ENCODE measurements at regions of chr6 and their contacts with region 1.

Region 1: DNA sequence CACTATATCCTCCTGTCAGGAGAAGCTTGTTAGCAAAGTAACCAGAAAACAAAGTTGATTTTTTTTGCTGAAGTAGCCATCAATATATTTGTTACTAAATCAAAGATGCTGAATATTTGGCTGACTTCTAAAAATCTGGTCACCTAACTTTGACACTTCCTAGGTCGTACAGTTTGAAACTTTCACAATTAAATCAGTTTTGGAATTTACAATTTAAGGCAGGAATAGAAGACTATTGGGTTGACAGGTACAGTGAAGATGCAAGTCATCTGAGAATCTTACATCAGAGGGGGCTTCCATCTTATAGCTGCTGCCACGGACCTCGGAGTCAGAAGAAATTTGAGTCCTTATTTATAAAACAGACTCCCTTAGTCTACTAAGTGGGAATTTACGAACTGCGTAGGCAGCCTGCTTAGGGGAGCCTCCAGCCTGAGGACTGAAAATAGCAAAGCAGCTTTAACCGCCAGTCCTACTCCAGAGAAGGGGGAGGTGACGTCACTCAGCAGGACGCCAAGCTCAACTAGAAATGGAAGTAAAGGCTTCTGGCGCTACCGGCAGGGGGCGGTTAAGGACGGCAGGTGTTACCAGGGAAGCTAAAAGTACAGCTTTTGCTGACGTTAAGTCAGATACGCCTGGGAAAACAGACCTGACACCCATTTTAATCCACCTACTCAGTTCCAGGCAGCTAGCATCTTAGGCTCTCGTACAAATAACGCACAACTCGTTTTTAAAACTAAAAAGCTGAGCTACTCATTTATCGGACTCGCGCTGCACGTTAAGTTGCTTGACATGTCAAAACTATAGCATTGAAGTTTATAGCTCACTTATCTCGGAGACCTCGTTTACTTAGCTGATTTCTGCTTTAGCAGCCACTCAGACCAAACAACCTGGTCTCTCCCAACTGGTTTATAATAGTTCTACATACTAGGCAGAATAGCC is 61.1 kb upstream of the HFE start:
- DNase-seq: peak; percentile 82 to 98 (median 95)
- ATAC-seq: peak; percentile 60
- H3K4me3 ChIP-seq: peak overlapping the region; percentile 75
- H3K4me3 Mint-ChIP-seq: peak overlapping the region; percentile 81 to 99 (median 94)
- H3K27ac ChIP-seq: peak overlapping the region; percentile 94
- H3K27ac Mint-ChIP-seq: peak overlapping the region; percentile 93 to 100 (median 98)
- H3K4me1 ChIP-seq: peaks cover 11 to 22% of the 10 kb centered on the region in 2 donors
- H3K4me1 Mint-ChIP-seq: peaks cover 12 to 81% (median 50%) of the 10 kb centered on the region in 7 donors
- H3K27me3 ChIP-seq: no peaks in the 10 kb centered on the region
- H3K27me3 Mint-ChIP-seq: peaks cover 0 to 9% (median 0%) of the 10 kb centered on the region in 5 donors

Region 2: GRCh38 chr6:25107218-25107617 is 918.9 kb before region 1 on chr6:
- CTCF ChIA-PET with region 1: no interaction called
- POLR2A ChIA-PET with region 1: no interaction called
- intact Hi-C with region 1: no loop called
- DNase-seq: no peak
- ATAC-seq: no peak
- H3K4me3 ChIP-seq: no peak overlapping the region
- H3K4me3 Mint-ChIP-seq: no peak overlapping the region
- H3K27ac ChIP-seq: no peak overlapping the region
- H3K27ac Mint-ChIP-seq: no peak overlapping the region
- H3K4me1 ChIP-seq: no peaks in the 10 kb centered on the region
- H3K4me1 Mint-ChIP-seq: peaks cover 0 to 34% (median 0%) of the 10 kb centered on the region in 7 donors
- H3K27me3 ChIP-seq: no peaks in the 10 kb centered on the region
- H3K27me3 Mint-ChIP-seq: no peaks in the 10 kb centered on the region

Region 3: DNA sequence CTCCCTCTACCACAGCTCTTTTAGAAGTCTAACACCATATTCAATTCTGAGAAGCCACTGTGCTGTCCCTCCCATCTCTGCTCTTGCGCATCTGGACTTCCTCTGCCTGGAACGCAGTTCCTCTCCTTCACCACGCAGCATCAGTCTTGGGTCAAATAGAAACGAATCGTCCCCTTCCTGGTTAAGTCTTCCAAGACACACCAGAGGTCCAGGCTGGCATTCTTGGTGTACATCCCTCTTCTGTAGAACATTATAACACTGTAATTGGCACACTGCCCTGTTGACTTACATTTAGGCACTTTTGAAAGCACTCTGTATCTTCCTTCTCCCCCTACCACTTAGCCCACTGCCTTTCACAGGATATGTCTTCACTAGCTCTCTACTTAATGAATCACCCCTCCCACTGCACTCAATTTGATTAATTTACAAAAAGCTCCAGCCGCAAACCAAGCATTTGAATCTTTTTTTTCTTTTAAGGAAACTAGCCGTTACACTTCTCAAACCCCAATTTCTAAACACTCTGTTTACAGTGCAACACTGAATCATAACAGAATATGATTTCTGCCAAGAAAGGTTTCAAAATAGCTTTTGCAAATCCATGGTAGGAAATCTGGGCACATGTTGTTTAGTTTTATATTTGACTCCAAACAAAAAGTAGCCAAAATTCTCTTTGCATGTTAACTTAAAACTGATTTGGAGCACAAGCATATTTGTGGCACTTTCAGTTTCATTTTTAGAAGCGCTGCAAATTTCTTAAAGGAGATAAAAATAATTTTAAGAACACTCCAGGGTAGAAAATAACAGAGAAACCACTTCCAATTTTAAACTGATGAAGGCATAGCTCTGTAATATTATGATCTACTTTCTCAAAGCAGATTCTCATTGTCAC is 887.7 kb before region 1 on chr6:
- CTCF ChIA-PET with region 1: no interaction called
- POLR2A ChIA-PET with region 1: interaction called, 3 read pairs
- intact Hi-C with region 1: loop called in 1 of 2 experiments (anchors 5 kb)
- DNase-seq: peak; percentile 14 to 67 (median 60)
- ATAC-seq: peak; percentile 94
- H3K4me3 ChIP-seq: peak overlapping the region; percentile 61
- H3K4me3 Mint-ChIP-seq: peak overlapping the region; percentile 84 to 98 (median 92)
- H3K27ac ChIP-seq: peak overlapping the region; percentile 76
- H3K27ac Mint-ChIP-seq: peak overlapping the region; percentile 87 to 97 (median 96)
- H3K4me1 ChIP-seq: peaks cover 12 to 16% of the 10 kb centered on the region in 2 donors
- H3K4me1 Mint-ChIP-seq: peaks cover 22 to 45% (median 27%) of the 10 kb centered on the region in 7 donors
- H3K27me3 ChIP-seq: no peaks in the 10 kb centered on the region
- H3K27me3 Mint-ChIP-seq: no peaks in the 10 kb centered on the region

Region 4: DNA sequence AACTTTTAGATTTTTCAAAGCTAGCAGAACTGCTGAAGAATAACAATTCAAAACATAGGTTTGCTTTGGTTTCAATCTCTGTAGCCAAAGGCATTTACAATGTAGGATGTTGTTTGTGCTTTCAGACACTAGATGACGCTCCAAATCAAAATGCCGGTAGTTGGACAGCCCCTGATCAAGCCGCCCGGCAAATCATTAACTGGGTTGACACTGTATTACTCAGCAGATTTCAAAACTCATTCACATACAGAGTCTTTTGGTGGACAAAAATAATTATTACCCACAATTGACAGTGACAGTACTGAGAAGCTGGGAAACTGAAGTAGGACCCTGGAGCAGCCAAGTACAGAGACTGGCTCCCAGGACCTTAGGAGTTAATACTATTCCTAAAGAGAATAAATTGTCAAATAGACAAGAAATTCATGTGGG is 39.8 kb after region 1 on chr6:
- CTCF ChIA-PET with region 1: interaction called, 21 read pairs
- POLR2A ChIA-PET with region 1: interaction called, 2,497 read pairs
- intact Hi-C with region 1: no loop called
- DNase-seq: peak in 7 of 9 donors; percentile 51 to 74 (median 61)
- ATAC-seq: peak; percentile 97
- H3K4me3 ChIP-seq: no peak overlapping the region
- H3K4me3 Mint-ChIP-seq: no peak overlapping the region
- H3K27ac ChIP-seq: no peak overlapping the region
- H3K27ac Mint-ChIP-seq: no peak overlapping the region
- H3K4me1 ChIP-seq: no peaks in the 10 kb centered on the region
- H3K4me1 Mint-ChIP-seq: peaks cover 1 to 22% (median 11%) of the 10 kb centered on the region in 7 donors
- H3K27me3 ChIP-seq: no peaks in the 10 kb centered on the region
- H3K27me3 Mint-ChIP-seq: peaks cover 0 to 39% (median 0%) of the 10 kb centered on the region in 5 donors

Region 5: GRCh38 chr6:26183581-26184366 is 157.6 kb after region 1 on chr6:
- CTCF ChIA-PET with region 1: no interaction called
- POLR2A ChIA-PET with region 1: interaction called, 292 read pairs
- intact Hi-C with region 1: no loop called
- DNase-seq: peak; percentile 43 to 83 (median 77)
- ATAC-seq: peak; percentile 91
- H3K4me3 ChIP-seq: peak overlapping the region; percentile 82
- H3K4me3 Mint-ChIP-seq: peak overlapping the region; percentile 84 to 99 (median 98)
- H3K27ac ChIP-seq: peak overlapping the region; percentile 76
- H3K27ac Mint-ChIP-seq: peak overlapping the region; percentile 83 to 99 (median 90)
- H3K4me1 ChIP-seq: peaks cover 13 to 30% of the 10 kb centered on the region in 2 donors
- H3K4me1 Mint-ChIP-seq: peaks cover 19 to 59% (median 49%) of the 10 kb centered on the region in 7 donors
- H3K27me3 ChIP-seq: no peaks in the 10 kb centered on the region
- H3K27me3 Mint-ChIP-seq: no peaks in the 10 kb centered on the region

Region 6: DNA sequence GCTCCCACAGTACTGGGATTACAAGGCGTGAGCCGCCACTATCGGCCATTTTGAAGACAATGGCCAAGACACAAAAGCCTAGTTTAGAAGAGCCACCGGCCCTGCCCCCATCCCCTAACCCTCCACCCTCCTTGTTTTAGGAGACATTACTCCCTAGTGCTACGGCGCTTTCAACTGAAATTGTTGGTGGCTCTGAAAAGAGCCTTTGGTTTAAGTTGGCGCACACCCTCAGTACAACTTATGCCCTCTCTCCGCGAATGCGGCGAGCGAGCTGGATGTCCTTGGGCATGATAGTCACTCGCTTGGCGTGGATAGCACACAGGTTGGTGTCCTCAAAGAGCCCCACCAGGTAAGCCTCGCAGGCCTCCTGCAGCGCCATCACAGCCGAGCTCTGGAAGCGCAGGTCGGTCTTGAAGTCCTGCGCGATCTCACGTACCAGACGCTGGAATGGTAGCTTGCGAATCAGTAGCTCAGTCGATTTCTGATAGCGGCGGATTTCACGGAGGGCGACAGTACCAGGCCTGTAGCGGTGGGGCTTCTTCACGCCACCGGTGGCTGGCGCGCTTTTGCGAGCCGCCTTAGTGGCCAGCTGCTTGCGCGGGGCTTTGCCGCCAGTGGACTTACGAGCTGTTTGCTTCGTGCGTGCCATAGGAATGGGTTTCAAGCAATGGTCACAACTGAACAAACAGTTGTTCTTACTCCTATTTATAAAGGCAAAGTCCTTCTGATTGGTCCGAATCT is 224.0 kb after region 1 on chr6:
- CTCF ChIA-PET with region 1: no interaction called
- POLR2A ChIA-PET with region 1: interaction called, 23 read pairs
- intact Hi-C with region 1: no loop called
- DNase-seq: peak; percentile 53 to 85 (median 80)
- ATAC-seq: peak; percentile 85
- H3K4me3 ChIP-seq: peak overlapping the region; percentile 84
- H3K4me3 Mint-ChIP-seq: peak overlapping the region; percentile 88 to 100 (median 96)
- H3K27ac ChIP-seq: peak overlapping the region; percentile 71
- H3K27ac Mint-ChIP-seq: peak overlapping the region; percentile 85 to 97 (median 94)
- H3K4me1 ChIP-seq: peaks cover 4 to 19% of the 10 kb centered on the region in 2 donors
- H3K4me1 Mint-ChIP-seq: peaks cover 20 to 48% (median 39%) of the 10 kb centered on the region in 7 donors
- H3K27me3 ChIP-seq: no peaks in the 10 kb centered on the region
- H3K27me3 Mint-ChIP-seq: no peaks in the 10 kb centered on the region

Region 7: DNA sequence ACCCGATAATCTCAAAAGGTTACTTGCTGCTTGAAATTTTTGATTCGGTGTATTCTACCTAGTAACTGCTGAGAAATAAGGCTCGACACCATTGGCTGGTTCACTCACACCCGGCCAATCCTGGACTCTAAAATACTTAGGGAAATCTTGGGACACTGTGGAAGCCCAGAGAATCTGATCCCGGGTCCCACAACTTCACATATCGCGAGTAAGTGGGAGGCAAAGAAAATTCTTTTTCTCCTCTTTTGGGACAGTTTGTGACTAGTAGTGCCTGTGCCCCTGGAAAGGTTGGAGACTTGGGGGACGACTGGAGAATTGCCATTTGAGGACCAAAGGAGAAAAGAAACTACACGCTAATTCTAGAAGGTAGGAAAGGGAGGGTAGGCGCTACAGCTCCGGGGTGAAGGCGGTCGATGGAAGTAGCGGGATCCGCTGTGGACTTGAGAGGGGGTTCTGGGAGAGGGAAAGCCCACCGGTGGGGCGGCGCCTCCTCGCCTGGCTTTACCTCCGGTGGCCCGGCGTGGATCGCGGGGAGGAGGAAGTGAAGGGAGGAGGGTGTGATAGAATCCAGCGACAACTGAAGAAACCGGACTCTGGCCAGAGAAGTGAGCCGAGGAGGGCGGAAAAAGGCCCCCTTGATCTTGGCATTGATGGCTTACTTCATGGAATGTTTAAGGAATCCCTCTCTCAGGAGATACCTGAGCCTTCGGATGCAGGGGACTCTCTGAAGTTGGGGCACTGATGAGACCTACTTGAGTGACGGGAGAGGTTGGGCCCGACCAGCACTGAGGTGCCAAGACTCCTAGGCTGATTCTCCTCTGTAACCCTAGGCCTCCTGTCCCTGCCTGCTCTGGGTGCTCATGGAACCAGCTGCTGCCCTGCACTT is 395.3 kb after region 1 on chr6:
- CTCF ChIA-PET with region 1: no interaction called
- POLR2A ChIA-PET with region 1: no interaction called
- intact Hi-C with region 1: no loop called
- DNase-seq: peak; percentile 11 to 71 (median 62)
- ATAC-seq: peak; percentile 96
- H3K4me3 ChIP-seq: peak overlapping the region; percentile 79
- H3K4me3 Mint-ChIP-seq: no peak overlapping the region
- H3K27ac ChIP-seq: peak overlapping the region; percentile 71
- H3K27ac Mint-ChIP-seq: peak overlapping the region in 2 of 9 donors; percentile 43 to 79
- H3K4me1 ChIP-seq: peaks cover 5 to 9% of the 10 kb centered on the region in 2 donors
- H3K4me1 Mint-ChIP-seq: peaks cover 0 to 16% (median 3%) of the 10 kb centered on the region in 7 donors
- H3K27me3 ChIP-seq: no peaks in the 10 kb centered on the region
- H3K27me3 Mint-ChIP-seq: no peaks in the 10 kb centered on the region

Region 8: GRCh38 chr6:27146706-27147505 is 1120.7 kb after region 1 on chr6:
- CTCF ChIA-PET with region 1: interaction called, 3 read pairs
- POLR2A ChIA-PET with region 1: interaction called, 46 read pairs
- intact Hi-C with region 1: no loop called
- DNase-seq: peak; percentile 71 to 96 (median 92)
- ATAC-seq: peak; percentile 92
- H3K4me3 ChIP-seq: peak overlapping the region; percentile 90
- H3K4me3 Mint-ChIP-seq: no peak overlapping the region
- H3K27ac ChIP-seq: peak overlapping the region; percentile 89
- H3K27ac Mint-ChIP-seq: no peak overlapping the region
- H3K4me1 ChIP-seq: peaks cover 6 to 7% of the 10 kb centered on the region in 2 donors
- H3K4me1 Mint-ChIP-seq: peaks cover 0 to 26% (median 14%) of the 10 kb centered on the region in 7 donors
- H3K27me3 ChIP-seq: no peaks in the 10 kb centered on the region
- H3K27me3 Mint-ChIP-seq: no peaks in the 10 kb centered on the region

Region 9: DNA sequence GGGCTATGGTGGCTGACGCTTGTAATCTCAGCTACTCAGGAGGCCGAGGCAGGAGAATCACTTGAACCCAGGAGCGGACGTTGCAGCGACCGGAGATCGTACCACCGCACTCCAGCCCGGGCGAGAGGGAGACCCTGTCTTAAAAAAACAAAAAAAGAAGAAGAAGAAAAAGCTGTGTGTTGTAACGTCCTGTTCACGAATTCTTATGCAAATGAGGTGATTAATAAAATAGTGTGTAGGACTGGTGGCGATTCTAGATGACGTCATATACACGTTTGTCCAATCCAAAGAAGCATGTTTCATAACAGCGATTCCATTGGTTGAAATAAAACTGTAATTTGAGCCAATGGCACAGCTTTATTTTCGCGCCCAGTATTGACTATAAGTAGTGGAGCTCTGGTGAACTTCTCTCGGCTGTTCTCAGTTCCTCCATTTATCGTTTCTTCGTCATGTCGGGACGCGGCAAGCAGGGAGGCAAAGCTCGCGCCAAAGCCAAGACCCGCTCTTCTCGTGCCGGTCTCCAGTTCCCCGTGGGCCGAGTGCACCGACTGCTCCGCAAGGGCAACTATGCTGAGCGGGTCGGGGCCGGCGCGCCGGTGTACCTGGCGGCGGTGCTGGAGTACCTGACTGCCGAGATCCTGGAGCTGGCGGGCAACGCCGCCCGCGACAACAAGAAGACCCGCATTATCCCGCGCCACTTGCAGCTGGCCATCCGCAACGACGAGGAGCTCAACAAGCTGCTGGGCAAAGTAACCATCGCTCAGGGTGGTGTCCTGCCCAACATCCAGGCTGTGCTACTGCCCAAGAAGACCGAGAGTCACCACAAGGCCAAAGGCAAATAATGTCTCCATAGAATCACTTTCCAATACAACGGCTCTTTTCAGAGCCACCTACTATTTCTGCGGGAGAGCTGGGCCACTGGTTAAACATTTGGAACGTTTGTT is 1839.0 kb after region 1 on chr6:
- CTCF ChIA-PET with region 1: no interaction called
- POLR2A ChIA-PET with region 1: interaction called, 34 read pairs
- intact Hi-C with region 1: loop called in 1 of 2 experiments (anchors 5 kb)
- DNase-seq: peak; percentile 56 to 93 (median 89)
- ATAC-seq: peak; percentile 85
- H3K4me3 ChIP-seq: peak overlapping the region; percentile 74
- H3K4me3 Mint-ChIP-seq: peak overlapping the region; percentile 85 to 99 (median 97)
- H3K27ac ChIP-seq: peak overlapping the region; percentile 71
- H3K27ac Mint-ChIP-seq: peak overlapping the region; percentile 88 to 98 (median 95)
- H3K4me1 ChIP-seq: peaks cover 8 to 25% of the 10 kb centered on the region in 2 donors
- H3K4me1 Mint-ChIP-seq: peaks cover 22 to 64% (median 46%) of the 10 kb centered on the region in 7 donors
- H3K27me3 ChIP-seq: no peaks in the 10 kb centered on the region
- H3K27me3 Mint-ChIP-seq: peaks cover 0 to 16% (median 0%) of the 10 kb centered on the region in 5 donors